GM12878 (cell line): ENCODE measurements at regions of chr12 and their contacts with region 1.

Region 1: DNA sequence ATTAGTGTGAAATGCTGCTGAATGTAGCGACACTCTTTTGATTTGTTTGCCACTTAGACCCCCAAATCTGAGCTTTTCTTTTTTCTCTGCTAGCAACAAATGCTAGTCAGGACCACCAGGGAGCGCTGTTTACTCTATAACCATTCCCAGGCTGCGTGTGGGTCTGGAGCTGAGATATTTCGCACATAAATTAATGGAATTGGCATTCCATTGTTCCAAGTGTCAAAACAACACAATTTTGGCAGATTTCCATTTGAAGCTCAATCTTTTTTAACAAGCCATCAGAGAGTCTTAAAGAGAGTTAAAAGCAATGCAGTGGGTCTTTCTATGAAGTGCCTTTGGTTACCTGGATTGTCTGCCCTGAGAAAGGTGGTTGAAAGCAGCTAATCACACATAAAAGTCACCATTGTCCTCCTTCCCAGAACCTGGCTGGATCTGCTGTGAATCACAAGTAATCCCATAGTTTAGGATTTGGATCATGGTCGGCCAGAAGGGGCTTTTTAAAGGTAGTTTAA is 7.4 kb upstream of the TMEM132C start:
- DNase-seq: no peak
- ATAC-seq: no peak
- H3K4me3 ChIP-seq: no peak overlapping the region
- H3K27ac ChIP-seq: no peak overlapping the region
- H3K4me1 ChIP-seq: no peaks in the 10 kb centered on the region
- H3K27me3 ChIP-seq: no peaks in the 10 kb centered on the region
- CTCF ChIP-seq: peak; percentile 54 to 74 (median 58); a peak in 5 of 6 replicates
- EP300 ChIP-seq: no peak
- POLR2A ChIP-seq: no peak
- RAD21 ChIP-seq: peak; percentile 76

Region 2: GRCh38 chr12:128131955-128132354 is 127.7 kb before region 1 on chr12:
- CTCF ChIA-PET with region 1: no interaction called
- POLR2A ChIA-PET with region 1: no interaction called
- RAD21 ChIA-PET with region 1: no interaction called
- SMC1A ChIA-PET with region 1: no interaction called
- in situ Hi-C with region 1: no loop called
- intact Hi-C with region 1: no loop called
- DNase-seq: no peak
- ATAC-seq: no peak
- H3K4me3 ChIP-seq: no peak overlapping the region
- H3K27ac ChIP-seq: no peak overlapping the region
- H3K4me1 ChIP-seq: no peaks in the 10 kb centered on the region
- H3K27me3 ChIP-seq: no peaks in the 10 kb centered on the region
- CTCF ChIP-seq: no peak
- EP300 ChIP-seq: no peak
- POLR2A ChIP-seq: no peak
- RAD21 ChIP-seq: no peak

Region 3: DNA sequence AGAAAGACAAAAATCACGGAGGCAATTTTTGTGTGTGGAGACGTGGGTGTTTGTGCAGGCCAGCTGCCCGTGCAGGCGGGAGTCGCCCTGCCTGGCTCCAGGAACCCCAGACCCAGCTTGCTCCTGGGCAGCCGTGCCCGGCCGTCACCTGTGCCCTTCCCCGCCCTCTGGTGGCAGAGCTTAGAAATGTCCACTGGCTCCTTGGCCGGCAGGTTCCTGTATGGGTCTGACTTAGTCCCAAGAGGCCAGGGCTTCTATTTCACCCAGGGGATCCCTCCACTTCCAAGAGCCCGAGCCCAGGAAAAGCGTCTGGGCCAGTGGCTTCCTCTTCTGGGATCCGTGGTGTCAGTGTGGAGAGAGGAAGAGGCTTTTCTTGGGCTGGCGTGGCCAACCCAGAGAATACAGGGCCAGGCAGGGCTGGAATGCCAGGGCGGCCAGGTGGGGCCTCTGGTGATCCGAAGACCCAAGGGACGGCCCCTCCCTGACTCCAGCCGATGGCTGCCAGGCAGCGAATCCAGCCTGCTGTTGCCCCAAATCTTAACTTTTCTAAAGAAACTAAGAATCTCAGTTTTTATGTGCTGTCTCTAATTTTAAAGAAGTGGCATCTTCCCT is 128.3 kb after region 1 on chr12:
- CTCF ChIA-PET with region 1: interaction called, 11 read pairs
- POLR2A ChIA-PET with region 1: no interaction called
- RAD21 ChIA-PET with region 1: interaction called, 9 read pairs
- SMC1A ChIA-PET with region 1: interaction called, 5 read pairs
- in situ Hi-C with region 1: no loop called
- intact Hi-C with region 1: loop called (anchors 1 kb)
- DNase-seq: no peak
- ATAC-seq: peak; percentile 91
- H3K4me3 ChIP-seq: no peak overlapping the region
- H3K27ac ChIP-seq: no peak overlapping the region
- H3K4me1 ChIP-seq: no peaks in the 10 kb centered on the region
- H3K27me3 ChIP-seq: peaks cover 0 to 2% of the 10 kb centered on the region in 2 experiments; a peak in 2 of 4 replicates
- CTCF ChIP-seq: peak; percentile 57 to 78 (median 58); a peak in 5 of 6 replicates
- EP300 ChIP-seq: no peak
- POLR2A ChIP-seq: no peak
- RAD21 ChIP-seq: peak; percentile 33